ENCODE measurements at regions of chr1 and their contacts with region 1.

Region 1: DNA sequence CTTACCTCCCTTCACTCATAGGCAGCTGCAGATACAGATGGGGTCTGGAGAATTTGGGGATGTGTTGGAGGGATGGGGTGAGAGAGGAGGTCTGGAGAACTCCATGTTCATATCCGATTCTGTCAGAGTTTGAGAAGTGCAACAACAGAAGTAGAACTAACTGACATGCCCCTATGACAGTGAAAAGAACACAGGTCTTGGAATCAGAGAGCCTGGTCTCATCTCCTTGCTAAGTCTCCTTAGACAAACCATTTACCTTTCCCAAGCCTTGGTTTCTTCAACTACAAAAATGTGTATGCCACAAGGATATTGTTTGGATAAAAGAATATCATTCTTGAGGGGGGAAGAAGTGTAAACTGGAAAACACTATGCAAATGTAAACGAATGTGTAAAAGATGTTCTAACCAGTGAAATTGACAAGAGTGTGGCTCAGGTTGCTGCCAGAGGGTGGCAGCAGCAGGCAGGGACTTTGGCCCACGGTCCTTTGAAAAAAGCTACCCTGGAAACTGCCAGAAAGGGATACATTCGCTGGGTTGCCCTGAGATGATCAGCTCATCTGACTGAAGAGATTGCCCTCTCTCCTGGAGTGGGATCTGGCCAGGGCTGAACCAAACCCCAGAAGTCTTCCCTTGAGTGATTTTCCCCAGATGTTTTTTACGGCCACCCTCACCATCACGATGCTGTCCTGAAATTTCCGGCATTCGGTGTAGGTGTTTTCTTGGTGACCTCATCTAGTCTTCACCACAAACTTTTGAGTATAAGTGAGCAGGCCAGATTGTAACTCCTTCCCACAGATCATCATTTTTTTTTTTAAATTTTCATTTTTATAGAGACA is 17.0 kb upstream of the CD2 start:
- DNase-seq: peak in 2 of 4 donors; percentile 33 to 64
- ATAC-seq: peak; percentile 86
- H3K4me3 ChIP-seq: no peak overlapping the region
- H3K27ac ChIP-seq: no peak overlapping the region
- H3K4me1 ChIP-seq: no peaks in the 10 kb centered on the region
- H3K27me3 ChIP-seq: no peaks in the 10 kb centered on the region
- CTCF ChIP-seq: peak; percentile 60 to 65

Region 2: GRCh38 chr1:116722016-116722838 is 15.0 kb before region 1 on chr1:
- intact Hi-C with region 1: no loop called
- DNase-seq: no peak
- ATAC-seq: peak; percentile 35
- H3K4me3 ChIP-seq: no peak overlapping the region
- H3K27ac ChIP-seq: no peak overlapping the region
- H3K4me1 ChIP-seq: no peaks in the 10 kb centered on the region
- H3K27me3 ChIP-seq: no peaks in the 10 kb centered on the region
- CTCF ChIP-seq: no peak

Region 3: DNA sequence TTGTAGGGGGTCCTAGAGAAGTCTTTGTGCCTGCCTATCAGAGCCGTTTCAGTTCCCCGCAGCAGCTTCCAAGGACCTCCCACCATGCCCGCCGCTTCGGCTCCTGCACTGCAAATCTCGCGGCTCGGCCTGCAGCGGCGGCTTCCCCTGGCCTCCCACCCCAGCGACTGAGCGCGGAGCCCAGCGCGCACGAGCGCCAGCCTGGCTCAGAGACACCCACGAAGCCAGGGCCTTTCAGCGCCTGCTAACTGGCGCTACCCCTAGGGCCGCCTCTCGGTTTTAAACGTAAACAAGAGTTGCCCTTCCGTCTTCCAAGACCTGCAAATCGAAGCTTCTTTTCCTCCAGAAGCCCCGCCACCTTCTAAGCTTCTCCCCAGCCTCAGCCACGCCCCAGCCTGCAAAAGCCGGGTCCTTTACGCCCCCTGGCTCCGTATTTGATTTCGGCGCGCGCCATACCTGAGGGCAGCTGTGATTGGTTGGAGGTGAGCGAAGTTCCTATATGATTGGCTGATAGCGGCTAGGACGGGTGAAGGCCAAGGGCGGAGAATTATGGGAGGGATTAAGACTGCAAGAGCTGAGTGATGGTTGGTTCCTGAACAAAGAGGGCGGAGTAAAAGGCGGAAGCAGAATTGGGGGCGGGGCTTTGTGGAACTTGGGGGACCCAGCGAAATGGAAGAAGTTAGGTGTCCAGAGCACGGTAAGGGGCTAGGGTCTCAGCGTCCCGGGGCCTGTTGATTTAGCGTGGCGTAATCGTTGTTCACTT is 322.6 kb after region 1 on chr1 and contains the start of gene TTF2:
- intact Hi-C with region 1: loop called in 1 of 2 experiments (anchors 5 kb)
- DNase-seq: peak; percentile 91 to 98 (median 94)
- ATAC-seq: peak; percentile 98
- H3K4me3 ChIP-seq: peak within 1 kb of the TSS; percentile 63 to 77
- H3K27ac ChIP-seq: peak within 1 kb of the TSS; percentile 41 to 73
- H3K4me1 ChIP-seq: peaks cover 0 to 14% of the 10 kb centered on the region in 2 donors
- H3K27me3 ChIP-seq: no peaks in the 10 kb centered on the region
- CTCF ChIP-seq: no peak
- polyA plus RNA-seq, gene TTF2: 22.4 to 30.7 (median 25.3) TPM

Measured in left lung (tissue), 14 donors.